ENCODE measurements at regions of chr12 and their contacts with region 1.

Region 1: GRCh38 chr12:5988659-5989116 is 43.6 kb upstream of the ANO2 start:
- DNase-seq: peak; percentile 78
- ATAC-seq: peak; percentile 99
- H3K4me3 Mint-ChIP-seq: no peak overlapping the region
- H3K27ac Mint-ChIP-seq: no peak overlapping the region
- H3K4me1 Mint-ChIP-seq: no peaks in the 10 kb centered on the region
- H3K27me3 Mint-ChIP-seq: no peaks in the 10 kb centered on the region

Region 2: GRCh38 chr12:5706247-5706646 is 282.4 kb before region 1 on chr12:
- CTCF ChIA-PET with region 1: no interaction called
- POLR2A ChIA-PET with region 1: no interaction called
- DNase-seq: no peak
- ATAC-seq: no peak
- H3K4me3 Mint-ChIP-seq: no peak overlapping the region
- H3K27ac Mint-ChIP-seq: no peak overlapping the region
- H3K4me1 Mint-ChIP-seq: no peaks in the 10 kb centered on the region
- H3K27me3 Mint-ChIP-seq: no peaks in the 10 kb centered on the region

Region 3: GRCh38 chr12:5796171-5796958 is 192.3 kb before region 1 on chr12:
- CTCF ChIA-PET with region 1: no interaction called
- POLR2A ChIA-PET with region 1: no interaction called
- DNase-seq: no peak
- ATAC-seq: no peak
- H3K4me3 Mint-ChIP-seq: no peak overlapping the region
- H3K27ac Mint-ChIP-seq: no peak overlapping the region
- H3K4me1 Mint-ChIP-seq: no peaks in the 10 kb centered on the region
- H3K27me3 Mint-ChIP-seq: peaks cover 5% of the 10 kb centered on the region

Region 4: GRCh38 chr12:5977556-5977955 is 11.1 kb before region 1 on chr12:
- CTCF ChIA-PET with region 1: interaction called, 18 read pairs
- POLR2A ChIA-PET with region 1: no interaction called
- DNase-seq: peak; percentile 4
- ATAC-seq: no peak
- H3K4me3 Mint-ChIP-seq: no peak overlapping the region
- H3K27ac Mint-ChIP-seq: no peak overlapping the region
- H3K4me1 Mint-ChIP-seq: no peaks in the 10 kb centered on the region
- H3K27me3 Mint-ChIP-seq: no peaks in the 10 kb centered on the region

Region 5: DNA sequence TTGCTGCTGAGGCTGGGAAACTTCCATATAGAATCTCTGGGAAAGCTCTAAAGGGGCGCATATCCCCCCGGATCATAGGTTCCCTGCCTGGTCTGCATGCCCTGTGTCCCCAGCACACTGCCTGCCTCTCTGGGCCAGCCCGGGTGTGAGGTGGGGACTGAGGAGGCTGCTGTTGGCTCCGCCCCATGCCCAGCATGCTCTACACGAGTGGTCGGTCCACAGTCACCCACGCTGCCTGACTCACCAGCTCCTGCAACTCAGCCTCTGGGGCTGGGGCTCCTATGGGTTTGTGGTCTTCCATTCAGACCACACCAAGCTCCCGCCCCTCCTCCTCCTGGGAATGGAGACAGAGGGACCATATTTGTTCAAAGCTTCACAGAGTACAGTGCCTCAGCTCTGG is 44.9 kb after region 1 on chr12:
- CTCF ChIA-PET with region 1: interaction called, 141 read pairs
- POLR2A ChIA-PET with region 1: interaction called, 3 read pairs
- DNase-seq: no peak
- ATAC-seq: no peak
- H3K4me3 Mint-ChIP-seq: no peak overlapping the region
- H3K27ac Mint-ChIP-seq: no peak overlapping the region
- H3K4me1 Mint-ChIP-seq: no peaks in the 10 kb centered on the region
- H3K27me3 Mint-ChIP-seq: no peaks in the 10 kb centered on the region

Region 6: DNA sequence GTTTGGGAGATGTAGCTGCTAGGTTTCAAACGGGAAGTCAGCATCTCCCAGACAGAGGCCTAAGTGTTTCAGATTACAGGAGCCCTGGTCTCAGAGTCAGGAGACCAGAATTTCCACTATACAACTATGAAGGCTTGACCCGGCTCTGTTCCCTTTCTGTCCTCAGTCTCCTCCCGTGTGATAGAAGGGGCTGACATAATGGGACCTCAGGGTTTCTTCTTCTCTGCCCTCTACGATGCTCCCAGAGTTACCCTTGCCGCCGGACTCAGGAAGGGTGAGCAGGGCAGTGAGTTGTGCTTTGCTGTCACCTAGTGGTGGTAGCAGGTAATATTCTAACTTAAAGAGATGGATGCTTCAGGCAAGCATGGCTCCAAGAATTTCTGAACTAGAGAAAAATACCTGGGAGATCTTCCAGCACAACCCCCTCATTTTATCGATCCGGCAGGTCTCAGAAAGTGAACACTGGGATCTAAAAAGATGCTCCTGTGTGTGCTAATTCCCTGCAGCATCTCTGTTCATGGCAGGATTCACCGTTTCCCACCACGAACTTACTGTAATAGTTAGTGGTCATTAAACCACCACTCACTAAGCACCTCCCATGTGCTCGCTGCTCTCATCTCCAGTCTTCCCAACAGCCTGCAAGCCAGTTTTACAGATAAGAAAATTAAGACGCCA is 51.3 kb after region 1 on chr12:
- CTCF ChIA-PET with region 1: interaction called, 141 read pairs
- POLR2A ChIA-PET with region 1: interaction called, 3 read pairs
- DNase-seq: peak; percentile 64
- ATAC-seq: peak; percentile 84
- H3K4me3 Mint-ChIP-seq: no peak overlapping the region
- H3K27ac Mint-ChIP-seq: no peak overlapping the region
- H3K4me1 Mint-ChIP-seq: no peaks in the 10 kb centered on the region
- H3K27me3 Mint-ChIP-seq: peaks cover 4% of the 10 kb centered on the region

Region 7: GRCh38 chr12:6278439-6279255 is 290.0 kb after region 1 on chr12:
- CTCF ChIA-PET with region 1: interaction called, 22 read pairs
- POLR2A ChIA-PET with region 1: interaction called, 3 read pairs
- DNase-seq: peak; percentile 84
- ATAC-seq: peak; percentile 97
- H3K4me3 Mint-ChIP-seq: peak overlapping the region; percentile 71
- H3K27ac Mint-ChIP-seq: no peak overlapping the region
- H3K4me1 Mint-ChIP-seq: peaks cover 9% of the 10 kb centered on the region
- H3K27me3 Mint-ChIP-seq: peaks cover 19% of the 10 kb centered on the region

Region 8: DNA sequence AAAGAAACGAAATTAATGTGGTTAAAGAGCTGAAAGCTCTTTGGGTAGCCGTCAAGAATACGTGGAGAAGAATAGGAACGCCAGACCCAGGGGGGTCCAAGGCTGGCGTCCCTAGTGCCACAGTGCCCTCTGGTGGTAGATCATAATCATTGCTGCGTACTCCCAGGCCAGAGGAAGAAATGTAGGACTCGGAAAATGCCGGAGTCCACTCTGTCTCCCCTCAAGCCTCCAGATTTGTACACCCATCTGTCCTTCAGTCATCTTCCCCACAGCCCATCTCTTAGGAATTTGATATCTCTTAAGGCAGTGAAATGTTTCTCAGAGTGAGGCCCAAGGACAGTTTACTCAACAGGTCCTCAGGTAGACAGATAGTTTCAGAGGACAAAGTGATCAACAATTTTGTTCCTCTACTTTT is 296.4 kb after region 1 on chr12:
- CTCF ChIA-PET with region 1: interaction called, 22 read pairs
- POLR2A ChIA-PET with region 1: no interaction called
- DNase-seq: peak; percentile 71
- ATAC-seq: peak; percentile 86
- H3K4me3 Mint-ChIP-seq: no peak overlapping the region
- H3K27ac Mint-ChIP-seq: no peak overlapping the region
- H3K4me1 Mint-ChIP-seq: peaks cover 4% of the 10 kb centered on the region
- H3K27me3 Mint-ChIP-seq: peaks cover 3% of the 10 kb centered on the region